ENCODE measurements at regions of chr15 and their contacts with region 1.

Region 1: DNA sequence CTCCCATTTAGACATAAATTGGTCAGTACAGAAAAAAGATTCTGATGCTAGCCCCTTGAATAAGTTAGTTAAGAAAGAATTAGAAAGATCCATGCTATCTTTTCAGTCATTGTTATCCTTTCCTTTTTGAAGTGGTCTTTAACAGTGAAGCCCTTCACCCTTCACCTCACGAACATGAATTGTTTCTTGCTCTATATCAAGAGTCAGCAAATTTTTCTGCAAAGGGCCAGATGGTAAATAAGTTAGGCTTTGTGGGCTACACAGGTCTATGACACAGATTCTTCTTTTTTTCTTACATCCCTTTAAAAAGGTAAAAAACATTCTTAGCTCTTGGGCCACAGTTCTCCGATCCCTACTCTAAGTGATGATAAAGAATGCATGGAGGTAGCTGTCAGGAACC is 74.9 kb downstream of the DMXL2 start:
- DNase-seq: no peak
- ATAC-seq: no peak
- H3K4me3 Mint-ChIP-seq: no peak overlapping the region
- H3K27ac Mint-ChIP-seq: no peak overlapping the region
- H3K4me1 Mint-ChIP-seq: no peaks in the 10 kb centered on the region
- H3K27me3 Mint-ChIP-seq: no peaks in the 10 kb centered on the region
- CTCF ChIP-seq: no peak

Region 2: DNA sequence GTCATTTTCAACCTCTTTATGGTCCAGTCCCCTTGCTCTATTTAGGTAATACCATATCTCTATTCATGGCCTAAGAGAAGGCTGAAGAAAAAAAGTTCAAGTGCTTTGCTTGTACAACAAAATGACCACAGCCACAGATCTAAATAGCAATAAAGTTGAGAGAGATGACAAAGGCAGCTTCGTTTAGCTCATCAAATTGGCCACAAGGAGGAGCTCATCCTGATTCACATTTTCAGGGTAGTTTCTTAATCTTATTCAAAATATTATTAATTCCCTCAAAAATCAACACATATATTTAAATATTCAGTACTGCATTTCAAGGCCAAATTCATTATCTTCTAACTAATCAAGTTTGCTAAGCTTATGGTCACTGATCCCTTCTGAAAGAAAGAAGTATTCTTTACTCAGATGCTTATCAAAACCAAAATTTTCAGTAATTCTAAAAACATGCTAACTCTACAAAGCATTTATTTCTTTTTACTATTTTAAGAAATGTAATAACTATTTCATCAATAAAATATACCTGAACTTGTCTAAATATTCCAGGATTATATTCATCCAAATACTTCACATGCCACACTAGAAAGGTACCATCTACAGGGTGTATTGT is 10.6 kb before region 1 on chr15:
- CTCF ChIA-PET with region 1: interaction called, 21 read pairs
- POLR2A ChIA-PET with region 1: no interaction called
- DNase-seq: no peak
- ATAC-seq: no peak
- H3K4me3 Mint-ChIP-seq: no peak overlapping the region
- H3K27ac Mint-ChIP-seq: no peak overlapping the region
- H3K4me1 Mint-ChIP-seq: no peaks in the 10 kb centered on the region
- H3K27me3 Mint-ChIP-seq: no peaks in the 10 kb centered on the region
- CTCF ChIP-seq: peak; percentile 35; the same call in 1 of the 2 replicates

Region 3: DNA sequence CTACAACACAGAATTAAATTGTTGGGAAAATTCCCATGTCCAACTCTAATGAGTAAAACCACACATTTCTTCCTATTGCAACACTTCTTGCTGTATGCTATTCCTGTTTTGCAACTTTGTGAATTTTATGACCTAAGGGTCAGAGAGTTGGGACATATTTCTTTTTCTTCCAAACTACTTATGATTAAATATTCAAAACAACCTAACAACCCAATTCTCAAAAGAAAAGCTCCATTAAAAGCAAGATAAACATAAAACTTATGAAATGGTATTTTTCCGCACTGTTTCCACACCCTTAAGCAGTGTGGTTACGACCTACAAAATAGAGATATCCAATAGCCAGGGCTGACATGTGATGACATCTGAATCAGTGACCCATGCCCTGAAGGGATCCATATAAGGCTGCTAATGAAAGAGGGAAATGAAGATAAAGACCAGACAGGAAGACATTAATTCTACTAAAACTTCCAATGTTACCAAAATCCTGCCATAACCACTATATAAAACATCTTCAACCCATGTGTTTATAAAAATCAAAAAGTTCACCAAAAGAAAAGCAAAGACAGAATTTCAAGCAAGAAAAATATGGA is 29.4 kb after region 1 on chr15:
- CTCF ChIA-PET with region 1: no interaction called
- POLR2A ChIA-PET with region 1: no interaction called
- DNase-seq: no peak
- ATAC-seq: no peak
- H3K4me3 Mint-ChIP-seq: no peak overlapping the region
- H3K27ac Mint-ChIP-seq: no peak overlapping the region
- H3K4me1 Mint-ChIP-seq: no peaks in the 10 kb centered on the region
- H3K27me3 Mint-ChIP-seq: no peaks in the 10 kb centered on the region
- CTCF ChIP-seq: no peak

Measured in WTC11 (cell line).